Heart left ventricle (tissue), 16 donors: ENCODE measurements at regions of chr1 and their contacts with region 1.

Region 1: DNA sequence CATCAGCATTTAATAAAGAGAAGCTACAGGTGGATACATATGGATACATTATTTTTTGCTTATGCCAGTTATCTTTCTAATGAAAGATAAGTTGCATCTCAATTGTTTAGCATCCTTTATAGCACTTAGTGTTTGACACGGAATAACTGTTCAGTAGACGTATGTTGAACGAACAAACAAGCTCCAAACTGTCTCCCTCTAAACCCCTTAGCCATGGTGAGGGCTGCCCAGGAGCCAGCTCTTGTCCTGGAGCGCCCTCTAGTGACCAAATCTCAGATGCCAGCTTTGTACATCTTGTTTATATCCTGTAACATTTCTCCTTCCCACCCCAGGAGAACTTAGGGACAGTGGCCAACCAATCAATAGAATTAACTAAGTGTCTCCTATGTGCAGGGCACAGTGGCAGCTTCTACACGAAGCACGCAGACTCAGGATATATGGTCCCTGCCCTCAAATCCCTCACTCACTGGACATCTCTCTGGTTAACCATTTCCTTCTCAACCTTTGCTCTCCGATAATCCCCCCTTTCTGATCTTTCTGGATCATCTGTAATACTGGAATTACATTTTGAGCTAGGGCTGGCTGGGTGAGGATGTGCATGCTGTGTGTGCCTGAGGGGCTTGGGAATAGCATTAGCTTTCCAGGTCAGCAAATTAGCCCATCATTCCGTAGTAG is 22.9 kb downstream of the KCNA10 start:
- DNase-seq: peak in 4 of 5 donors; percentile 62 to 77 (median 68)
- ATAC-seq: peak; percentile 60 to 88 (median 81)
- H3K4me3 ChIP-seq: no peak overlapping the region
- H3K27ac ChIP-seq: no peak overlapping the region
- H3K4me1 ChIP-seq: no peaks in the 10 kb centered on the region
- H3K27me3 ChIP-seq: no peaks in the 10 kb centered on the region
- CTCF ChIP-seq: peak; percentile 78 to 94 (median 90)
- POLR2A ChIP-seq: no peak

Region 2: GRCh38 chr1:110060034-110060661 is 435.9 kb before region 1 on chr1:
- intact Hi-C with region 1: no loop called
- DNase-seq: peak in 2 of 5 donors; percentile 49 to 73
- ATAC-seq: no peak
- H3K4me3 ChIP-seq: no peak overlapping the region
- H3K27ac ChIP-seq: no peak overlapping the region
- H3K4me1 ChIP-seq: peaks cover 0 to 12% (median 0%) of the 10 kb centered on the region in 12 donors
- H3K27me3 ChIP-seq: no peaks in the 10 kb centered on the region
- CTCF ChIP-seq: peak; percentile 42 to 82 (median 64)
- POLR2A ChIP-seq: no peak

Region 3: DNA sequence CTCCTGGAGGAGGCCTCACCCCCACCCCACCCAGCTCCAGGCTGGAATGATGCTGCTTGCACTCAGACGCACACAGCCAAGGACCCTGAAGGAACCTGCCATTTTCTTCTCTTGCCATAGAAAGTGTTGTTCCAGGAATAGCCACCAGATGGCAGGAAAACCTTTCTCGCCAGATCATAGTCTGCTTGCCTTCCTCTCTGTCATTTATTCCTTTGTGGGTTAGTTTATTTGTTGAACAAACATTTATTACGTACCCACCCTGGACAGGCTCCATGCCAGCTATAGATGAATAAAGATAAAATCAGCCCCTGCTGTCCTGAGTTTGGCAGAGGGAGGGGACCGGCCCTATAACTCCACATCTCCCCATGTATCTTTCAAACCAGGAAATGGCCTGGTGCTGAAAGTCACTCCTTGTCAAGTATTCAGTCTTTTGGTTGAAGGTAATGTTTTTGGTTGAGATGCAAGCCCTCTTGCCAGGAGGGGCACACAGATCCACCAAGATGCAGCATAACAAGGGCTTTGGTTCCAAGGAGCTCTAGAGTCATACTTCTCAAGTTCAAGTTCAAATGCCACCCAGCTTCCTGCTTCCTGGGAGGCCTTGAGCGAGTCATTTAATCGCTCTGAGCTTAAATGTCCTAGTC is 292.9 kb before region 1 on chr1:
- intact Hi-C with region 1: loop called in 5 of 10 experiments (anchors 2 to 10 kb)
- DNase-seq: peak in 2 of 5 donors; percentile 43 to 44
- ATAC-seq: peak; percentile 30 to 57 (median 46)
- H3K4me3 ChIP-seq: no peak overlapping the region
- H3K27ac ChIP-seq: no peak overlapping the region
- H3K4me1 ChIP-seq: peaks cover 0 to 11% (median 0%) of the 10 kb centered on the region in 12 donors
- H3K27me3 ChIP-seq: no peaks in the 10 kb centered on the region
- CTCF ChIP-seq: peak; percentile 78 to 93 (median 86)
- POLR2A ChIP-seq: no peak

Region 4: GRCh38 chr1:110312188-110313121 is 183.6 kb before region 1 on chr1:
- intact Hi-C with region 1: loop called in 1 of 10 experiments (anchors 2 kb)
- DNase-seq: peak; percentile 83 to 89 (median 85)
- ATAC-seq: peak; percentile 89 to 96 (median 94)
- H3K4me3 ChIP-seq: no peak overlapping the region
- H3K27ac ChIP-seq: no peak overlapping the region
- H3K4me1 ChIP-seq: peaks cover 0 to 50% (median 17%) of the 10 kb centered on the region in 12 donors
- H3K27me3 ChIP-seq: no peaks in the 10 kb centered on the region
- CTCF ChIP-seq: peak; percentile 84 to 98 (median 94)
- POLR2A ChIP-seq: no peak

Region 5: DNA sequence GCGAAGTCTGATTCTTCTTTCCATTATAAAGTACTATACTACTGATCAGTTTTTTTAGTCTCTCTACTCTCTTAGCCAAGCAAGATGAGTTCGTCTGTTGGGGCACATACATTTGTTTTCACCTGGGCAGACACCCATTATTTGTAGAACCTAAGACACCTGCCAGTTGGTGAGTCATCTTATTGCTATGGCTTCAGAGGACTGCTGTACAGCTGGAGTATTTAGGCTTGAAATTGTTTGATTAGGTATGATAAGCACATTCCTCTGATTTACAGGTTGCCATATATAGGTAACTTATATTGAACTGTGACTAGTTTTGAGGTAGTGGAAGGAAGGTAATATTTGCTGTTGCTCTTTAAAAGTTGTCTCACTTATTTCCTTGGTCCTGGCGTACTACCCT is 139.7 kb before region 1 on chr1:
- intact Hi-C with region 1: no loop called
- DNase-seq: no peak
- ATAC-seq: no peak
- H3K4me3 ChIP-seq: no peak overlapping the region
- H3K27ac ChIP-seq: no peak overlapping the region
- H3K4me1 ChIP-seq: peaks cover 0 to 19% (median under 1%) of the 10 kb centered on the region in 12 donors
- H3K27me3 ChIP-seq: no peaks in the 10 kb centered on the region
- CTCF ChIP-seq: no peak
- POLR2A ChIP-seq: no peak

Region 6: GRCh38 chr1:110370827-110371226 is 125.2 kb before region 1 on chr1:
- intact Hi-C with region 1: no loop called
- DNase-seq: no peak
- ATAC-seq: peak in 3 of 4 donors; percentile 58 to 75 (median 68)
- H3K4me3 ChIP-seq: no peak overlapping the region
- H3K27ac ChIP-seq: no peak overlapping the region
- H3K4me1 ChIP-seq: peaks cover 0 to 4% (median 0%) of the 10 kb centered on the region in 12 donors
- H3K27me3 ChIP-seq: no peaks in the 10 kb centered on the region
- CTCF ChIP-seq: no peak
- POLR2A ChIP-seq: no peak

Region 7: GRCh38 chr1:110412576-110412975 is 83.5 kb before region 1 on chr1:
- intact Hi-C with region 1: loop called in 2 of 10 experiments (anchors 2 to 5 kb)
- DNase-seq: peak; percentile 42 to 80 (median 70)
- ATAC-seq: peak; percentile 40 to 76 (median 58)
- H3K4me3 ChIP-seq: no peak overlapping the region
- H3K27ac ChIP-seq: no peak overlapping the region
- H3K4me1 ChIP-seq: peaks cover 0 to 34% (median 16%) of the 10 kb centered on the region in 12 donors
- H3K27me3 ChIP-seq: no peaks in the 10 kb centered on the region
- CTCF ChIP-seq: peak; percentile 61 to 83 (median 75)
- POLR2A ChIP-seq: no peak

Region 8: DNA sequence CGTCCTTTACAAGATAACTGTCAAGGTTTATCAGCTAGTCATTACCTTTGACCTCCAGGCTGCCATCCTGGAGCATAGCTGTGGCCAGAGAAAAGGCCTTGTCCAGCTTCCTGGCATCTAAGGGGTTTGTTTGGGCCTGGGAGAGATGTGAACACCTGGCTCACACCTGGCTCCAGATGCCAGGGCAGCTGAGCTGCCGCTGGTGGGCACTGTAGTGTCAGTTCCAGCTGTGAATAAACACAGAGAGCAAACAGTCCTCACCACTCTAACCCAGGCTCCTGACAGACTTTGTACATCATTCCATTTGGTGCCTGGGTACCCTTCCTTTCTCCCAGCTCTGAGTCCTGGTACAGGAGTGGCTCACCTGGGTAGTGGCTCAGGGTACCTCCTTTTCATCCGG is 37.2 kb after region 1 on chr1:
- intact Hi-C with region 1: no loop called
- DNase-seq: no peak
- ATAC-seq: no peak
- H3K4me3 ChIP-seq: no peak overlapping the region
- H3K27ac ChIP-seq: no peak overlapping the region
- H3K4me1 ChIP-seq: no peaks in the 10 kb centered on the region
- H3K27me3 ChIP-seq: peaks cover 0 to 47% (median 4%) of the 10 kb centered on the region in 9 donors
- CTCF ChIP-seq: no peak
- POLR2A ChIP-seq: no peak